ENCODE measurements at regions of chr4 and their contacts with region 1.

Region 1: GRCh38 chr4:48127682-48128394 is 6.2 kb downstream of the TXK start:
- DNase-seq: peak; percentile 95
- H3K4me3 ChIP-seq: peak overlapping the region in 1 of 3 experiments; percentile 2
- H3K27ac ChIP-seq: peak overlapping the region; percentile 88
- H3K4me1 ChIP-seq: peaks cover 19% of the 10 kb centered on the region
- H3K27me3 ChIP-seq: no peaks in the 10 kb centered on the region
- CTCF ChIP-seq: peak; percentile 55 to 58
- POLR2A ChIP-seq: peak; percentile 33

Region 2: GRCh38 chr4:48275247-48275646 is 147.4 kb after region 1 on chr4:
- CTCF ChIA-PET with region 1: interaction called, 9 read pairs
- POLR2A ChIA-PET with region 1: no interaction called
- dilution Hi-C with region 1: no loop called
- intact Hi-C with region 1: loop called (anchors 2 kb)
- DNase-seq: no peak
- H3K4me3 ChIP-seq: no peak overlapping the region
- H3K27ac ChIP-seq: no peak overlapping the region
- H3K4me1 ChIP-seq: no peaks in the 10 kb centered on the region
- H3K27me3 ChIP-seq: peaks cover 0 to 2% of the 10 kb centered on the region in 2 experiments
- CTCF ChIP-seq: peak; percentile 50 to 60
- POLR2A ChIP-seq: no peak

Region 3: GRCh38 chr4:48290146-48290772 is 162.4 kb after region 1 on chr4:
- CTCF ChIA-PET with region 1: no interaction called
- POLR2A ChIA-PET with region 1: no interaction called
- dilution Hi-C with region 1: no loop called
- intact Hi-C with region 1: loop called (anchors 1 kb)
- DNase-seq: peak; percentile 22
- H3K4me3 ChIP-seq: no peak overlapping the region
- H3K27ac ChIP-seq: no peak overlapping the region
- H3K4me1 ChIP-seq: no peaks in the 10 kb centered on the region
- H3K27me3 ChIP-seq: peaks cover 5 to 9% of the 10 kb centered on the region in 2 experiments
- CTCF ChIP-seq: peak; percentile 55 to 68
- POLR2A ChIP-seq: no peak

Region 4: DNA sequence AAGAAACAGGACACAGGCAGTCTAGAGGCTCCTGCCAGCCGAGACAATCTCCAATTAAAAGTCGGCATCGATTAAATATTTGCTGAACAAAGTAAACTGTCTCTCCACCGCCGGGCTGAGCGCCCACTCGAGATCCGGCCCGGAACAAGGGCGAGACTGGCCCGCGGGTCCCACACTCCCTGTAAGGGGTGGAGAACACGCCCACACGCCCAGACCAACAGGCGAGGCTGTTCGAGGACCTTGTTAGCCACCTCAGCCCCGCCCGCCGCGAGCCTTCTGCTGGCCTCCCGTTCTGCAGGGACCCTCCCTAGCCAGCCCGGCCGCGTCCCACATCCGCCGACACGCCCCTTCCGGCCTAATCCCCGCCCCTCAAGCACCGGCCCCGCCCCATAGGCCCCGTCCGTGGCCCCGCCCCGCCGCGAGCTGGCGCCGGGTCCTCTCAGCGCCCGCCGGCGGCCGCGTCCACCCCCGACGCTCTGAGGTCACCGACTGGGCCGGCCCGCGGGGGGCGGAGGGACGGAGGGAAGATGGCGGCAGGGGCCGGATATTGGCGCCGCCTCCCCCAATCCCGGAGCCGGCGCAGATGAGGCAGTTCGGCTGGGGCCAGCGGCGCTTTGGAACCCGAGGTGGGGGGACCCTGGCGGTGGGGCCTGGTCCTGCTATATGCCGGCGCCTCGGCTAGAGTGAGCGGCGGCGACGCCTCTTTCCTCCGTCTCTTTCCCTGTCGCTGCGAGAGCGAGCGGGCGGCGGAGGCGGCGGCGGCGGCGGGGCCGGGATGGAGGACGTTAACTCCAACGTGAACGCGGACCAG is 213.3 kb after region 1 on chr4 and contains the start of gene SLAIN2:
- CTCF ChIA-PET with region 1: no interaction called
- POLR2A ChIA-PET with region 1: no interaction called
- dilution Hi-C with region 1: no loop called
- intact Hi-C with region 1: loop called (anchors 1 kb)
- DNase-seq: peak; percentile 98
- H3K4me3 ChIP-seq: peak within 1 kb of the TSS; percentile 75 to 95 (median 92)
- H3K27ac ChIP-seq: peak within 1 kb of the TSS; percentile 98
- H3K4me1 ChIP-seq: peaks cover 25% of the 10 kb centered on the region
- H3K27me3 ChIP-seq: no peaks in the 10 kb centered on the region
- CTCF ChIP-seq: peak; percentile 36 to 57
- POLR2A ChIP-seq: peak; percentile 94
- total RNA-seq, gene SLAIN2: 40.6 and 49.5 TPM in 2 replicates

Region 5: GRCh38 chr4:48546336-48546735 is 418.5 kb after region 1 on chr4:
- CTCF ChIA-PET with region 1: interaction called, 7 read pairs
- POLR2A ChIA-PET with region 1: no interaction called
- dilution Hi-C with region 1: no loop called
- intact Hi-C with region 1: loop called (anchors 1 kb)
- DNase-seq: peak; percentile 51
- H3K4me3 ChIP-seq: no peak overlapping the region
- H3K27ac ChIP-seq: no peak overlapping the region
- H3K4me1 ChIP-seq: peaks cover 5% of the 10 kb centered on the region
- H3K27me3 ChIP-seq: no peaks in the 10 kb centered on the region
- CTCF ChIP-seq: peak; percentile 28 to 51
- POLR2A ChIP-seq: no peak